ENCODE measurements at regions of chr19 and their contacts with region 1.

Region 1: DNA sequence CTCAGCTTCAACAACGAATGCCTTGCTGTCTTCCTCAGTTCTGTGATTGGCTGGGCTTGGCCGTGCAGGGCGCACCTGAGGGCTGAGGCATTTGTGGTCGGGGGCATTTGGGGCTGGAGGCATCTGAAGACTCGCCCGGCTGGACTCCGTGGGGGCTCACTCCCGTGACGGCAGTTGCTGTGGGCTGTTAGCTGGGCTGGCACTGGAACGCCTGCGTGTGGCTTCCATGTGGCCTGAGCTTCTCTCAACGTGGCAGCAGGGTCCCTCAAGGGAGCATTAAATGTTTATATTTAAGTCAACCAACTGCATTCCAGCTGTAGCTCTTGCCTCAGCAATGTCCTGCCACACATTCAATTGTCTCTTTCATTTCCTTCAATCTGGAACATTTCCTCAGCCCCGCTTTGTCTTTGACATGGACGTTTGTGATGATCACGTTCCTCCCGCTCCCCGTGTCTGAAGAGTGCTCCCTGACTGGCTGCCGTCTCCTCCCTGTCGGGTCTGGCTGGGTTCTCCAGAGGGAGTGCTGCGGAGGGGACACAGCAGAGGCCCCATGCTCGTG is 21.0 kb downstream of the CCDC8 start:
- DNase-seq: peak in 1 of 4 donors; percentile 4
- ATAC-seq: no peak
- H3K4me3 ChIP-seq: no peak overlapping the region
- H3K27ac ChIP-seq: no peak overlapping the region
- H3K4me1 ChIP-seq: no peaks in the 10 kb centered on the region
- H3K27me3 ChIP-seq: no peaks in the 10 kb centered on the region
- CTCF ChIP-seq: no peak
- POLR2A ChIP-seq: no peak

Region 2: GRCh38 chr19:46487802-46488445 is 95.6 kb after region 1 on chr19:
- intact Hi-C with region 1: loop called (anchors 2 kb)
- DNase-seq: peak; percentile 79 to 86 (median 82)
- ATAC-seq: peak; percentile 82
- H3K4me3 ChIP-seq: no peak overlapping the region
- H3K27ac ChIP-seq: no peak overlapping the region
- H3K4me1 ChIP-seq: peaks cover 22% of the 10 kb centered on the region
- H3K27me3 ChIP-seq: no peaks in the 10 kb centered on the region
- CTCF ChIP-seq: peak; percentile 80 to 98 (median 97)
- POLR2A ChIP-seq: no peak